Mammary epithelial cell (primary cell): ENCODE measurements at regions of chr1 and their contacts with region 1.

Region 1: GRCh38 chr1:201399352-201400126 is 415 bp upstream of the LAD1 start:
- DNase-seq: peak; percentile 85
- H3K4me3 ChIP-seq: peak overlapping the region; percentile 88 to 90 (median 90)
- H3K27ac ChIP-seq: peak overlapping the region; percentile 77
- H3K4me1 ChIP-seq: peaks cover 44% of the 10 kb centered on the region
- H3K27me3 ChIP-seq: no peaks in the 10 kb centered on the region
- CTCF ChIP-seq: no peak

Region 2: GRCh38 chr1:201385299-201385891 is 14.1 kb before region 1 on chr1:
- CTCF ChIA-PET with region 1: no interaction called
- dilution Hi-C with region 1: no loop called
- in situ Hi-C with region 1: no loop called
- intact Hi-C with region 1: loop called (anchors 1 kb)
- DNase-seq: peak; percentile 54
- H3K4me3 ChIP-seq: no peak overlapping the region
- H3K27ac ChIP-seq: no peak overlapping the region
- H3K4me1 ChIP-seq: no peaks in the 10 kb centered on the region
- H3K27me3 ChIP-seq: no peaks in the 10 kb centered on the region
- CTCF ChIP-seq: peak; percentile 90 to 95

Region 3: DNA sequence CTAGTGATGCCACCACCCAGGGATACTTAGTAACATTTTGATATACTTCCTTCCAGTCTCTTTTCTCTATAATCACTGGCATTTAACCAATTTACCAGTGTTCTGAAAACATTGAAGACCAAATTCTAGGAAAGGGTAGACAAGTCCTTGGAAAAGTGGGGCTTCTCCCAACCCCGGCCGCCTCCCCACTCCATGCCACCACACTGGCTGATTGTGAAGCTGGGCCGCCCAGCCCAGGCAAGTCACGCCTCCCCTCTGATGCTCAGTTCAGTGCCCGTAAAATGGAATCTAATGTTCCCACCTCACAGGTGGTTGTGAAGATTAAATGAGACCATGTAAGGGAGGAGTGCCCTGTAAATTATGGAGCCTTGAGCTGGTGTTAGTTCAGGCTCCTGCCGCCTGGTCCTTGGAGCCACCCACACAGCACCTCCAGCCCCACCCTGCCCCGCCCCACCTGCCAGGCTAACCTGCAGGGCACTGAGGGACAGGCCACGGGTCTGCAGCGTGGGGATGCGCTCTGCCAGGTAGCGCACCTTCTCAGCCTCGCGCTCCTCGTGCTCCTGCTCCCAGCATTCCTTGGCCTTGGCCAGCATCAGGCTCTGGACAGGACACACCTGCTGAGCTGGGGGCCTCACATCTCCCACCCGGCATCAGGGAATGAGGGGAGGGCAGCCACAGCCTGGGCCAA is 14.7 kb after region 1 on chr1:
- CTCF ChIA-PET with region 1: no interaction called
- dilution Hi-C with region 1: no loop called
- in situ Hi-C with region 1: no loop called
- intact Hi-C with region 1: no loop called
- DNase-seq: no peak
- H3K4me3 ChIP-seq: no peak overlapping the region
- H3K27ac ChIP-seq: no peak overlapping the region
- H3K4me1 ChIP-seq: no peaks in the 10 kb centered on the region
- H3K27me3 ChIP-seq: no peaks in the 10 kb centered on the region
- CTCF ChIP-seq: no peak

Region 4: DNA sequence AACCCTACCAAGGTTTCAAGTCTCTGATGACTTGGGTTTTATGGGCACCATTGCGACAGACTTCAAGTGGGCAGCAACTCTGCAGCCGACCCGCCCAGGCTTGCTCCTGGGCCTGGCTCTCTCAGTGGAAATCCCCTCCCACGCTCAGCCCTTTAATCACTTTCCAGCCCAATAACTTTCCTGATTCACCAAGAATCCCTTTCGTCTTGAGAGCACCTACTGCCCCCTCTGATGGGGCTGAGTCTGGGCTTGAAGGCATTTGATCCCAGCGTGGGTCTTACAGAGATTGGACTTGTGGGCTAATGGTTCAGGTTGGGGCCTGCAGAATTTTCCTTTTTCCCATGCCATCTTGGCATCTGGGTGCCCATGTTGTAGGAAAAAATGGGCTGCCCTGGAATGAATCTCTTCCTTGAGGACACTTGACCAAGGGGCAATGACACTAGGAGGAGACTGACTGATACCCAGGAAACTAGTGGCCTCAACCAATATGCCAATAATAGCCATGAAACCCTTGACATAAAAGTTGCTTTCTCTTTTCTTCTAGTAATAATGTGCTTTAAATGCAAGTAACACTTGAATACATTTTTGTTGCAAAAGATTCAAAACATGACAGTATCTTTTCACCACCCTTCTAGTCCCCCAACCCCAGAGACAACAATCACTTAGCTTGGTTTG is 77.3 kb after region 1 on chr1:
- CTCF ChIA-PET with region 1: no interaction called
- dilution Hi-C with region 1: loop called (anchors 5 kb)
- in situ Hi-C with region 1: no loop called
- intact Hi-C with region 1: no loop called
- DNase-seq: peak; percentile 99
- H3K4me3 ChIP-seq: no peak overlapping the region
- H3K27ac ChIP-seq: peak overlapping the region; percentile 97
- H3K4me1 ChIP-seq: peaks cover 58% of the 10 kb centered on the region
- H3K27me3 ChIP-seq: no peaks in the 10 kb centered on the region
- CTCF ChIP-seq: peak in 1 of 2 donors; percentile 39

Region 5: GRCh38 chr1:201709564-201710295 is 310.2 kb after region 1 on chr1:
- CTCF ChIA-PET with region 1: no interaction called
- dilution Hi-C with region 1: no loop called
- in situ Hi-C with region 1: no loop called
- intact Hi-C with region 1: no loop called
- DNase-seq: peak; percentile 35
- H3K4me3 ChIP-seq: no peak overlapping the region
- H3K27ac ChIP-seq: no peak overlapping the region
- H3K4me1 ChIP-seq: peaks cover 45% of the 10 kb centered on the region
- H3K27me3 ChIP-seq: no peaks in the 10 kb centered on the region
- CTCF ChIP-seq: peak; percentile 80 to 93